MCF 10A (cell line): ENCODE measurements at regions of chr11 and their contacts with region 1.

Region 1: GRCh38 chr11:83292709-83293456 is 6.7 kb upstream of the CCDC90B start:
- DNase-seq: peak; percentile 68
- H3K4me3 Mint-ChIP-seq: peak overlapping the region; percentile 43
- H3K27ac Mint-ChIP-seq: peak overlapping the region; percentile 47
- H3K4me1 Mint-ChIP-seq: peaks cover 4% of the 10 kb centered on the region
- H3K27me3 Mint-ChIP-seq: no peaks in the 10 kb centered on the region
- CTCF ChIP-seq: peak; percentile 64

Region 2: DNA sequence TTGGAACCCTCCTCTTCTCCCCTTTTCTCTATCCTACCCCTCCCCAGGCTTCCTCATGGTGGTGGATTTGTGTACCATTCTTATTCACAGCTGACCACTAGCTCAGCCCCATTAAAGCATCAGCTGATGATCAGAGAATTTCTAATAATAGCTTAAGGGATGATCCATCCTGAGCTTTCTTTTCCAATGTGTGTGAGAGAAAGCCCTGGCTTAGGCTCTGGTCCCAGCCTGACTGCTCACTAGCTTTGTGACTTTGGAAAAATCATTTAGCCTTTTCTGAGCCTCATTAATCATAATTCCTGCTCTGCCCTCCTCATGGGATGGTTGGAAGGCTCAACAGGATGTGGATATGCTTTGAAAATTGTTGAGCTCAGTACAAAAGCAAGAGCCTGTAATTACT is 19.5 kb after region 1 on chr11:
- CTCF ChIA-PET with region 1: interaction called, 50 read pairs
- POLR2A ChIA-PET with region 1: no interaction called
- intact Hi-C with region 1: no loop called
- DNase-seq: no peak
- H3K4me3 Mint-ChIP-seq: no peak overlapping the region
- H3K27ac Mint-ChIP-seq: no peak overlapping the region
- H3K4me1 Mint-ChIP-seq: no peaks in the 10 kb centered on the region
- H3K27me3 Mint-ChIP-seq: peaks cover 23% of the 10 kb centered on the region
- CTCF ChIP-seq: no peak

Region 3: DNA sequence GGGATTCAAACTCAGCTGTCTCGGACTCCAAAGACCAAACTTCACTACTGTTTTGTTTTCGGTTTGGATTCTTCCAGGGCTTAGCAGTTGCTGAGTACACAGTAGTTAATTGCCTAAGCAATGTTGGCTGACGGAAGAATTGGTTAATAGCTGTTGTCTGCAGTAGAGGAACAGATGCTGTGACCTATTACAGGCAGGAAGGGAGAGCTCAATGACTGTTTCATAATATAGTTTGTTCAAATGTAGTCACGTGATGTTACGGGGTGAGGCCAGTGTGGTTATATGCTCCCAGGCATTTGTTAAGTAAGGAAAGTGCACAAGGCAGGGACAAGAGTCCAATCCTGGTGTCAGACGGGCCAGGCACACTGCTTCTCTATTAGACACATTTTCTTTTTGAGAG is 215.9 kb after region 1 on chr11:
- CTCF ChIA-PET with region 1: no interaction called
- POLR2A ChIA-PET with region 1: no interaction called
- intact Hi-C with region 1: no loop called
- DNase-seq: peak; percentile 17
- H3K4me3 Mint-ChIP-seq: no peak overlapping the region
- H3K27ac Mint-ChIP-seq: no peak overlapping the region
- H3K4me1 Mint-ChIP-seq: peaks cover 4% of the 10 kb centered on the region
- H3K27me3 Mint-ChIP-seq: peaks cover 31% of the 10 kb centered on the region
- CTCF ChIP-seq: no peak

Region 4: GRCh38 chr11:83671289-83671688 is 378.4 kb after region 1 on chr11:
- CTCF ChIA-PET with region 1: interaction called, 18 read pairs
- POLR2A ChIA-PET with region 1: no interaction called
- intact Hi-C with region 1: loop called (anchors 1 kb)
- DNase-seq: peak; percentile 6
- H3K4me3 Mint-ChIP-seq: no peak overlapping the region
- H3K27ac Mint-ChIP-seq: no peak overlapping the region
- H3K4me1 Mint-ChIP-seq: no peaks in the 10 kb centered on the region
- H3K27me3 Mint-ChIP-seq: peaks cover 62% of the 10 kb centered on the region
- CTCF ChIP-seq: no peak

Region 5: GRCh38 chr11:83813296-83813695 is 520.4 kb after region 1 on chr11:
- CTCF ChIA-PET with region 1: interaction called, 383 read pairs
- POLR2A ChIA-PET with region 1: interaction called, 10 read pairs
- intact Hi-C with region 1: loop called (anchors 1 kb)
- DNase-seq: no peak
- H3K4me3 Mint-ChIP-seq: no peak overlapping the region
- H3K27ac Mint-ChIP-seq: no peak overlapping the region
- H3K4me1 Mint-ChIP-seq: no peaks in the 10 kb centered on the region
- H3K27me3 Mint-ChIP-seq: peaks cover 30% of the 10 kb centered on the region
- CTCF ChIP-seq: no peak

Region 6: GRCh38 chr11:83827940-83828554 is 535.2 kb after region 1 on chr11:
- CTCF ChIA-PET with region 1: interaction called, 383 read pairs
- POLR2A ChIA-PET with region 1: no interaction called
- intact Hi-C with region 1: no loop called
- DNase-seq: peak; percentile 27
- H3K4me3 Mint-ChIP-seq: no peak overlapping the region
- H3K27ac Mint-ChIP-seq: no peak overlapping the region
- H3K4me1 Mint-ChIP-seq: no peaks in the 10 kb centered on the region
- H3K27me3 Mint-ChIP-seq: peaks cover 47% of the 10 kb centered on the region
- CTCF ChIP-seq: peak; percentile 48